B cell (primary cell): ENCODE measurements at regions of chr5 and their contacts with region 1.

Region 1: DNA sequence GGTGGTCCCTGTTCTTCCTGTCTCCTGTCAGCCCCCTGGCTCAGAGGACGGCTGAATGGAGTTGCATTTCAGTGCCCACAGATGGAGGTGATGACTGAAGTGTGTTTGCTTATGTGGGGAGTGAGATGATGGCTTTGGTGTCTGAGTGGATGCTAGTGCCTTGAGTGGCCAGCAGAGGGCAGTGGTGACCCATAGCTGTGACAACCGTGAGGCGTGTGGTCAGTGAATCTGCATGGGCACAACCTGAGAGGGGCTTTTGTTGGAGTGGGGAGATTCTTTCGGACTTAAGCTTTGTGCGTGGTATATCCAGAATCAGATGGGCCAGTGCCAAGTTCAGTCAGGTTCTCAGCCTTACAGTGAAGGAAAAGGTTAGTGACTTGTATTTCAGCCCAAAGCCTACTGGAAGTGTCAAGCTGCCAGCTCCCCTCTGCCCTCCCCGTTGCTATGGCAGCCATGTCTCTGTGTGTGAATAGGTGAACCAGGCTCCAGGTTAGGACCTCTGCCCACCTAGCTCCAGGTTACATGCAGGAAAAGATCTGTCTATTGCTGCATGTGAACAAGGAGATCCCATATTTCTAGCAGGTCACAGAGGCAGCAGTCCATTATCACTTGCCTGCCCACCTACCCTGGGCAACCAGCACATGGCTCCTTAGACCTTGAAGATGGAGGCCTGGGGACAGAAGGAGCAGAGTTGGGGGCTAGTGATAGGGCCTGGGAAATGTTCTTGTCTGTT is 14.7 kb upstream of the CXXC5 start:
- DNase-seq: peak; percentile 87
- ATAC-seq: peak; percentile 14
- H3K4me3 ChIP-seq: no peak overlapping the region
- H3K4me3 Mint-ChIP-seq: peak overlapping the region; percentile 17
- H3K27ac ChIP-seq: peak overlapping the region; percentile 88 to 93
- H3K27ac Mint-ChIP-seq: peak overlapping the region; percentile 61
- H3K4me1 ChIP-seq: peaks cover 44 to 59% of the 10 kb centered on the region in 2 donors
- H3K4me1 Mint-ChIP-seq: peaks cover 54% of the 10 kb centered on the region
- H3K27me3 ChIP-seq: no peaks in the 10 kb centered on the region
- H3K27me3 Mint-ChIP-seq: no peaks in the 10 kb centered on the region
- CTCF ChIP-seq: peak; percentile 96

Region 2: GRCh38 chr5:139443831-139444453 is 189.5 kb before region 1 on chr5:
- CTCF ChIA-PET with region 1: no interaction called
- POLR2A ChIA-PET with region 1: no interaction called
- intact Hi-C with region 1: no loop called
- DNase-seq: no peak
- ATAC-seq: no peak
- H3K4me3 ChIP-seq: no peak overlapping the region
- H3K4me3 Mint-ChIP-seq: no peak overlapping the region
- H3K27ac ChIP-seq: no peak overlapping the region
- H3K27ac Mint-ChIP-seq: no peak overlapping the region
- H3K4me1 ChIP-seq: peaks cover 5 to 6% of the 10 kb centered on the region in 2 donors
- H3K4me1 Mint-ChIP-seq: peaks cover 9% of the 10 kb centered on the region
- H3K27me3 ChIP-seq: no peaks in the 10 kb centered on the region
- H3K27me3 Mint-ChIP-seq: peaks cover 3% of the 10 kb centered on the region
- CTCF ChIP-seq: no peak

Region 3: GRCh38 chr5:139574641-139575312 is 58.7 kb before region 1 on chr5:
- CTCF ChIA-PET with region 1: interaction called, 32 read pairs
- POLR2A ChIA-PET with region 1: interaction called, 3 read pairs
- intact Hi-C with region 1: no loop called
- DNase-seq: peak; percentile 63
- ATAC-seq: peak; percentile 67
- H3K4me3 ChIP-seq: no peak overlapping the region
- H3K4me3 Mint-ChIP-seq: peak overlapping the region; percentile 2
- H3K27ac ChIP-seq: peak overlapping the region in 1 of 2 donors; percentile 66
- H3K27ac Mint-ChIP-seq: peak overlapping the region; percentile 5
- H3K4me1 ChIP-seq: peaks cover 71 to 76% of the 10 kb centered on the region in 2 donors
- H3K4me1 Mint-ChIP-seq: peaks cover 74% of the 10 kb centered on the region
- H3K27me3 ChIP-seq: no peaks in the 10 kb centered on the region
- H3K27me3 Mint-ChIP-seq: no peaks in the 10 kb centered on the region
- CTCF ChIP-seq: peak; percentile 79

Region 4: GRCh38 chr5:139690064-139690802 is 56.8 kb after region 1 on chr5:
- CTCF ChIA-PET with region 1: interaction called, 502 read pairs
- POLR2A ChIA-PET with region 1: interaction called, 64 read pairs
- intact Hi-C with region 1: loop called (anchors 1 kb)
- DNase-seq: peak; percentile 71
- ATAC-seq: peak; percentile 51
- H3K4me3 ChIP-seq: peak overlapping the region in 2 of 5 experiments; percentile 8 to 9
- H3K4me3 Mint-ChIP-seq: peak overlapping the region; percentile 41
- H3K27ac ChIP-seq: peak overlapping the region; percentile 28 to 47
- H3K27ac Mint-ChIP-seq: peak overlapping the region; percentile 78
- H3K4me1 ChIP-seq: peaks cover 47 to 56% of the 10 kb centered on the region in 2 donors
- H3K4me1 Mint-ChIP-seq: peaks cover 52% of the 10 kb centered on the region
- H3K27me3 ChIP-seq: no peaks in the 10 kb centered on the region
- H3K27me3 Mint-ChIP-seq: no peaks in the 10 kb centered on the region
- CTCF ChIP-seq: peak; percentile 70

Region 5: GRCh38 chr5:139745800-139746690 is 112.6 kb after region 1 on chr5:
- CTCF ChIA-PET with region 1: interaction called, 73 read pairs
- POLR2A ChIA-PET with region 1: interaction called, 81 read pairs
- intact Hi-C with region 1: loop called (anchors 1 kb)
- DNase-seq: peak; percentile 84
- ATAC-seq: peak; percentile 29
- H3K4me3 ChIP-seq: peak overlapping the region in 4 of 5 experiments; percentile 57 to 71 (median 58)
- H3K4me3 Mint-ChIP-seq: peak overlapping the region; percentile 89
- H3K27ac ChIP-seq: peak overlapping the region; percentile 82 to 85
- H3K27ac Mint-ChIP-seq: peak overlapping the region; percentile 94
- H3K4me1 ChIP-seq: peaks cover 50 to 68% of the 10 kb centered on the region in 2 donors
- H3K4me1 Mint-ChIP-seq: peaks cover 79% of the 10 kb centered on the region
- H3K27me3 ChIP-seq: peaks cover 0 to 2% (median 0%) of the 10 kb centered on the region in 4 experiments
- H3K27me3 Mint-ChIP-seq: no peaks in the 10 kb centered on the region
- CTCF ChIP-seq: no peak

Region 6: GRCh38 chr5:139787568-139788293 is 154.3 kb after region 1 on chr5:
- CTCF ChIA-PET with region 1: interaction called, 26 read pairs
- POLR2A ChIA-PET with region 1: no interaction called
- intact Hi-C with region 1: no loop called
- DNase-seq: peak; percentile 88
- ATAC-seq: peak; percentile 91
- H3K4me3 ChIP-seq: peak overlapping the region; percentile 43 to 70 (median 62)
- H3K4me3 Mint-ChIP-seq: peak overlapping the region; percentile 93
- H3K27ac ChIP-seq: no peak overlapping the region
- H3K27ac Mint-ChIP-seq: peak overlapping the region; percentile 37
- H3K4me1 ChIP-seq: peaks cover 3 to 13% of the 10 kb centered on the region in 2 donors
- H3K4me1 Mint-ChIP-seq: peaks cover 10% of the 10 kb centered on the region
- H3K27me3 ChIP-seq: peaks cover 0 to 15% (median 4%) of the 10 kb centered on the region in 4 experiments
- H3K27me3 Mint-ChIP-seq: peaks cover 28% of the 10 kb centered on the region
- CTCF ChIP-seq: peak; percentile 97